ENCODE measurements at regions of chr2 and their contacts with region 1.

Region 1: GRCh38 chr2:36355151-36355889 is at the start of gene CRIM1:
- DNase-seq: peak; percentile 78
- H3K4me3 ChIP-seq: peak within 1 kb of the TSS; percentile 94
- H3K27ac ChIP-seq: peak within 1 kb of the TSS; percentile 77
- H3K27me3 ChIP-seq: no peaks in the 10 kb centered on the region
- CTCF ChIP-seq: no peak
- polyA plus RNA-seq, gene CRIM1: 142 and 168 TPM in 2 replicates

Region 2: GRCh38 chr2:36438449-36438977 is 83.2 kb after region 1 on chr2:
- CTCF ChIA-PET with region 1: interaction called, 5 read pairs
- POLR2A ChIA-PET with region 1: interaction called, 11 read pairs
- DNase-seq: peak; percentile 92
- H3K4me3 ChIP-seq: no peak overlapping the region
- H3K27ac ChIP-seq: peak overlapping the region; percentile 89
- H3K27me3 ChIP-seq: no peaks in the 10 kb centered on the region
- CTCF ChIP-seq: no peak

Region 3: GRCh38 chr2:36461039-36461681 is 105.8 kb after region 1 on chr2:
- CTCF ChIA-PET with region 1: interaction called, 14 read pairs
- POLR2A ChIA-PET with region 1: interaction called, 12 read pairs
- DNase-seq: peak; percentile 80
- H3K4me3 ChIP-seq: no peak overlapping the region
- H3K27ac ChIP-seq: peak overlapping the region; percentile 91
- H3K27me3 ChIP-seq: no peaks in the 10 kb centered on the region
- CTCF ChIP-seq: no peak

Region 4: DNA sequence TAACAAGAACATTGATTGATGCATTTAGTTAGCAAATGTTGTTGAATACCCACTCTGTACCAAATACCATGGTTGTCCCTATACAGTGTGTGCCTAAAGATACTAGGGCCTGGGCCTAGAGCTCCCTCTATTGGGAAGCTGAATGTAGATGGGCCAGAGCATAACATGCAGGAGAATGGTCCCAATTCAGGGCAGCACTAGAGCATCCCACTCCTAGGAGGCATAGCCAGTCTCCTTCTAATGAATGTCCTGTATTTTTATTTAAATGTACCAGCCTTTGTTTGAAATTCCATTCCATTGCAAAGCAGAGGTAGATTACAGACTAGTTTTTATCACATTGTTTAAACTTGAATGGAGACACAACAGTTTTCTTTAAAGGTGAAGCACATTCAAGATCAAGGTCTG is 152.1 kb after region 1 on chr2:
- CTCF ChIA-PET with region 1: interaction called, 17 read pairs
- POLR2A ChIA-PET with region 1: interaction called, 9 read pairs
- DNase-seq: no peak
- H3K4me3 ChIP-seq: no peak overlapping the region
- H3K27ac ChIP-seq: no peak overlapping the region
- H3K27me3 ChIP-seq: no peaks in the 10 kb centered on the region
- CTCF ChIP-seq: peak; percentile 95

Region 5: GRCh38 chr2:36663851-36664695 is 308.8 kb after region 1 on chr2:
- CTCF ChIA-PET with region 1: interaction called, 37 read pairs
- POLR2A ChIA-PET with region 1: no interaction called
- DNase-seq: no peak
- H3K4me3 ChIP-seq: no peak overlapping the region
- H3K27ac ChIP-seq: no peak overlapping the region
- H3K27me3 ChIP-seq: no peaks in the 10 kb centered on the region
- CTCF ChIP-seq: peak; percentile 74

Region 6: DNA sequence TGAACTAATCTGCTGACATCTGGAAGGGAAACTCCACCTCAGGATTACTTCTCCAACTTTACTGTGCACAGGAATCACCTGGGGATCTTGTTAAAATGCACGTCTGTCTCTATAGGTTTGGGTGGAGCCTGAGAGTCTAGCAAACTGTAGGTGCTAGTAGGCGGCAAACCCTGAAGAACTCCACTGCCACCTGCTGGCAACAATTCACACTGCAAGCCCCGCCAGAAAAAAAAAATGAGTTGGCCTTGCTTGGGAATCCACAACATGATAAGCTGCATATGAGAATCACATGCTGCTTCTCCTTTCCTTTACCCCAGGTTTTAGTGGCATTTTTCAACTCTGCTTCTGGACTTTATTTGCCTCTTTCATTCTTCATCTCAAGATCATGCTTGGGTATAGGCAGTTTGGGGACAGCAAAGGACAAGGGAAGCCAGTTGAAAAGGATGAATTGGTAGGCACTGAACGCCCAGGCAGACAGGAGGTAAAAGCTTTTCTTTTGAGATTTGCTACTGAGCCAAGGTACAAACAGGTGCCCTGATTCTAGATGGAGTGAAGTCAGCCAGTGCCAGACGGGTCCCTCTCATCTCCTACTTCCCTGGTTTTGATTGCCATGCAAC is 430.0 kb after region 1 on chr2:
- CTCF ChIA-PET with region 1: interaction called, 17 read pairs
- POLR2A ChIA-PET with region 1: no interaction called
- DNase-seq: peak; percentile 27
- H3K4me3 ChIP-seq: no peak overlapping the region
- H3K27ac ChIP-seq: no peak overlapping the region
- H3K27me3 ChIP-seq: peaks cover 33% of the 10 kb centered on the region
- CTCF ChIP-seq: peak; percentile 99